Endothelial cell of umbilical vein (primary cell): ENCODE measurements at regions of chr11 and their contacts with region 1.

Region 1: GRCh38 chr11:76782526-76783293 is 446 bp upstream of the TSKU start:
- DNase-seq: peak; percentile 86
- H3K4me3 ChIP-seq: peak overlapping the region; percentile 68 to 91 (median 84)
- H3K27ac ChIP-seq: peak overlapping the region; percentile 44
- H3K4me1 ChIP-seq: peaks cover 2% of the 10 kb centered on the region
- H3K27me3 ChIP-seq: peaks cover 0 to 2% of the 10 kb centered on the region in 2 experiments
- CTCF ChIP-seq: no peak
- POLR2A ChIP-seq: peak; percentile 74

Region 2: DNA sequence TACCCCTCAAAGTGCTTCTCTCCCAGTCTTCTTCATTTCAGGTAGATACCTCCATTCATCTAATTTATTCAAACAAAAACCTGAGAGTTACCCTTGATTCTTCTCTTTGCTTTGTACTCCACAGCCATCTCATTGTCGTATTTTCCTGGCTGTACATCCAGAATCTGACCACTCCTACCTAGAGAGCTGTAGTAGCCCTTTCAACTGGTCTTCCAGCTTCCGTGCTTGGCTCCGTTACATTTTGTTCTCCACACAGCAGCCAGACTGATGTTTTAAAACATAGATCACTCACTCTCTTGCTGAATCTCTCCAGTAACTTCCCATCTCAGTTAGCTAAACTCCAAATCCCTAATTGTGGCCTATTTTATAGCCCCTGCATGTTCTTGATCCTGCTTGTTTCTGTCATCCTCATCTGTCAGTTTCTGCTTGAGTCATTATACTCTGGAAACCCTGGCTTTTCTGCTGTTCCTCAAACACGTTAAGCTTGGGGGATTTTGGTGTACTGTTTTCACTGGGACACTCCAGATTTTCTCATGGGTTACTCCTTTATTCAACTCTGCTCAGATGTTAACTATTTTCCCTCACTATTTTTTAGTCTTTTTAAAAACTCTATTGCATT is 1826.2 kb before region 1 on chr11:
- CTCF ChIA-PET with region 1: no interaction called
- POLR2A ChIA-PET with region 1: no interaction called
- dilution Hi-C with region 1: no loop called
- intact Hi-C with region 1: no loop called
- DNase-seq: no peak
- H3K4me3 ChIP-seq: no peak overlapping the region
- H3K27ac ChIP-seq: no peak overlapping the region
- H3K4me1 ChIP-seq: peaks cover 11% of the 10 kb centered on the region
- H3K27me3 ChIP-seq: no peaks in the 10 kb centered on the region
- CTCF ChIP-seq: no peak
- POLR2A ChIP-seq: no peak

Region 3: DNA sequence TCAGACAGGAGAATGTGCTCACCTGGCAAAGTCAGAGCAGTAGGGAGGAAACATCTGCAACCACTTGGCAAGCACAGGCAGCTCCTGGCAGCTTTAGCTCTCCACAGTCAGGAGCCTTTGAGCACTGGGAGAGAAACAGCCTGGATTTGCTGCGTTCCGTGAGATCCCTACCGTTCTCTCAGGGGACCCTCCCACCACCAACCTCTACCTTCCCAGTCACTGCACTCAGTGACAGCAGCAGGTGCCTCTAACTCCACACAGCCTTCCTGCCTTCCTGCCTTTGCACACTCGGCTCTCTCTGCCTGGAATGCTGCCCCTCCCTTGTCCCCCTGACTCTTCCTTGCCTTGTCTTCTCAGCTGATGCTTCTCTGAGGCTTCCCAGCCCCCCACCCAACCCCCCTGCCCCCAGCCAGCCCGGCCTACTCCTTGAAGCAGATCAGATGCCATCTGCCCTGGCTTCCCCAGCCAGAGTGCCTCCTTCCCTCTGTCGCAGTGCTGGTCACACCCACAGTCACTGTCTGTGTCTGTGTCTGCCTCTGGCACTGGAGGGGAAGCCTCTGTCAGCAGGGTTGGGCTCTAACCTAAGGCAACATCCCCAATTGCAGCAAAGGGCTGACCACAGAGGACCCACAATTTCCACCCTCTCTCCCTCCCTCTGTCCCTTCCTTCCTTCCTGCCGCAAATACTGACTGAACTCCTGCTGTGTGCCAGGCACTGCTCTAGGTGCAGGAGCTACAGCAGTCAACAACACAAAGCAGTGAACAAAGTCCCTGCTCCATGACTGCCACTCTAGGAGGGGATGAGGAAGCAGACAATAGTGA is 14.4 kb before region 1 on chr11:
- CTCF ChIA-PET with region 1: interaction called, 4 read pairs
- POLR2A ChIA-PET with region 1: interaction called, 3 read pairs
- dilution Hi-C with region 1: no loop called
- intact Hi-C with region 1: loop called (anchors 1 kb)
- DNase-seq: peak; percentile 71
- H3K4me3 ChIP-seq: no peak overlapping the region
- H3K27ac ChIP-seq: no peak overlapping the region
- H3K4me1 ChIP-seq: peaks cover 22% of the 10 kb centered on the region
- H3K27me3 ChIP-seq: no peaks in the 10 kb centered on the region
- CTCF ChIP-seq: no peak
- POLR2A ChIP-seq: no peak

Region 4: DNA sequence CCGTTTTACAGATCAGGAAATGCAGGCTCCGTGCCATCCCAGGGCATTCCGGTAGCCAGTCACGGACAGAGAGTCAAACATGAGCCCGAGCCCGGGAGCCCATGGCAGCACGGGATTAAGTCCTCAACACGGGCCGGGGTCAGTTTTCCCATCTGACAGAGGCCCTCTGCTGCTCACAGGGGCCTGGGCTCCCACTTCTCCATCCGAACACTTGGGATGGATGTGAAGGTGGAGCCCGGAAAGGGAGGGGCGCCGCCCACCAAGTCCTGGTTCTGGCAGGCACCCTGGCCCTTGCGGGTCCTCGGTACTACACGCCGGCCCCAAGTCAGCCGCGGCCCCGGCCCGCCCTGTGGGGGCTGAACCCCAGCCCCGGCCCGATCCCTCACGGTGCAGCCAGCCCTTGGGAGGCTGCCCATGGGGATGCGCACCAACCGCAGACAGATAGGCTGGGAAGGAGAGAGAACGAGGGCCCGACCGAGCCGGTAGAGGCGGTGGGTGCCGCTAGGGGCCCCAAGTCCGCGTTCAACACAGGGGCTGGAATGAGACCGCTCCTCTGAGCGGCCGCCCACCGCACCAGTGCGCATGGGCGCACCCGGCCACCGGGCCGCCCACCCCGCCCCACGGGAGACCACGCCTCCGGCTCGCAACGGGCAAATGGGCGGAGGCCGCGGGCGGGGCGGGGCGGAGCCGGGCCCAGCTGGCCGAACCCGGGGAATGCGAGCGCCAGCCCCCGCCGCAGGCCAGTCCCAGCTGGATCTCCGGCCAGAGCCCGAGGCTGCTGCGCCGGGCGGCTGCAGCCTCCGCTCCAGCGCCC is 283.7 kb after region 1 on chr11 and contains the start of gene CAPN5:
- CTCF ChIA-PET with region 1: no interaction called
- POLR2A ChIA-PET with region 1: no interaction called
- dilution Hi-C with region 1: no loop called
- intact Hi-C with region 1: no loop called
- DNase-seq: peak; percentile 95
- H3K4me3 ChIP-seq: peak within 1 kb of the TSS; percentile 48 to 75 (median 62)
- H3K27ac ChIP-seq: no peak within 1 kb of the TSS
- H3K4me1 ChIP-seq: peaks cover 11% of the 10 kb centered on the region
- H3K27me3 ChIP-seq: no peaks in the 10 kb centered on the region
- CTCF ChIP-seq: peak; percentile 44 to 58
- POLR2A ChIP-seq: peak; percentile 98
- total RNA-seq, gene CAPN5: 14.3 and 15.0 TPM in 2 replicates